CD8-positive, alpha-beta memory T cell (primary cell): ENCODE measurements at regions of chr19 and their contacts with region 1.

Region 1: DNA sequence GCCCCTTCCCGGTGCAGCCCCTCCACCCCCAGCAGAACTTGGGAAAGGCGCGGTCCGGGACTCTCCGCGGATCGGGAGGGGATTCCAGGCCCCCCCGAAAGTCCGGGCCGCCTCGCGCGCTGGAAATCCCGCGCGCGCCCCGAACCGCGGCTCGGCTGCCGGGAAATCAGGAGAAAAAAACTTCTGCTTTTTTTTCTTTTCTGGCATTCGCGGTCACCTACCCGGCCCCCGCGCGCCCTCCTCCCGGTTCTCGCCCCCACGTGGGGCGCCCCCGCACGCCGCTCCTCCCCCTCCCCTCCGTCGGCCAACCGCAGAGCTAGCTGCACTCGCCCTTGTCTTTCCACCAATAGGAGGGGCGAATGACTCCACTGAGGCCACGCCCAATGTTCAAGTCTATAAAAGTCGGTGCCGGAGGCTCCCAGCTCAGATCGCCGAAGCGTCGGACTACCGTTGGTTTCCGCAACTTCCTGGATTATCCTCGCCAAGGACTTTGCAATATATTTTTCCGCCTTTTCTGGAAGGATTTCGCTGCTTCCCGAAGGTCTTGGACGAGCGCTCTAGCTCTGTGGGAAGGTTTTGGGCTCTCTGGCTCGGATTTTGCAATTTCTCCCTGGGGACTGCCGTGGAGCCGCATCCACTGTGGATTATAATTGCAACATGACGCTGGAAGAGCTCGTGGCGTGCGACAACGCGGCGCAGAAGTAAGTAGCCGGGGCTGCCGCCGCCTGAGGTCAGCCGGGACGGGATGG is at the start of gene GADD45B:
- DNase-seq: peak; percentile 93 to 98 (median 96)
- H3K4me3 ChIP-seq: peak within 1 kb of the TSS; percentile 92
- H3K4me3 Mint-ChIP-seq: peak within 1 kb of the TSS; percentile 98 to 100 (median 100)
- H3K27ac ChIP-seq: peak within 1 kb of the TSS; percentile 83
- H3K27ac Mint-ChIP-seq: peak within 1 kb of the TSS; percentile 91 to 99 (median 96)
- H3K4me1 ChIP-seq: peaks cover 15% of the 10 kb centered on the region
- H3K4me1 Mint-ChIP-seq: peaks cover 8 to 22% (median 17%) of the 10 kb centered on the region in 3 donors
- H3K27me3 ChIP-seq: no peaks in the 10 kb centered on the region
- H3K27me3 Mint-ChIP-seq: peaks cover 0 to 16% of the 10 kb centered on the region in 2 donors
- total RNA-seq, gene GADD45B: 51.1 to 53.7 TPM

Region 2: DNA sequence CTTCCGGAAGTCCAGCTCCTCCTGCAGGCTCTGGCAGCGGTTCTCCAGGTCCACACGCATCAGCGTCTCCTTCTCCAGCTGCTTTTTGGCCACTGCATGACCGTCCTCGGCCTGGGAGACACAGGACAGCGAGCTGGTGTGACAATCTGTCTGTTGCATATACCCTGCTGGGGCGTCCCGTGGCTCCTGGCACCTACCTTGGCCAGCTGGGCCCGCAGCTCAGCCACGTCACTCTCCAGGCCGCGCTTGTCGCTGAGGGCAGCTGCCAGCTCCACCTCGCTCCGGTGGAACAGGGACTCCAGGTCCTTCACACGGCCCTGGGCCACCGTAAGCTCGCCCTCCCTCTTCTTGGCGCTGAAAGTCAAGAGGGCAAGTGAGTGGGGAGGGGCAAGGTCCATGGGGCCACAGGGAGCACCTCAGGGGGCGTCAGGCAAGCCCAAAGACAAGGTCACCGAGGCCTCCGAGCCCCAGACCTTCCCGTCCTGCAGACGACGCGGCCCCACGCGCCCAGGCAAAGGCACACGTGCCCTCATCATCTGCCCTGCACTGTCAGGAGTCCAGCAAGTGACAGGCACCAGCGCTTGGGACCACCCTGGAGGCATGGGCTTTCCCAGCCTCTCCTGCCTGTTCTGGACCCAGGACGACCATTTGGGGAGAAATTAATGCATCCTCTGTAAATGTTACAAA is 37.6 kb before region 1 on chr19:
- CTCF ChIA-PET with region 1: no interaction called
- POLR2A ChIA-PET with region 1: no interaction called
- DNase-seq: no peak
- H3K4me3 ChIP-seq: no peak overlapping the region
- H3K4me3 Mint-ChIP-seq: no peak overlapping the region
- H3K27ac ChIP-seq: no peak overlapping the region
- H3K27ac Mint-ChIP-seq: no peak overlapping the region
- H3K4me1 ChIP-seq: no peaks in the 10 kb centered on the region
- H3K4me1 Mint-ChIP-seq: peaks cover 0 to 4% (median 3%) of the 10 kb centered on the region in 3 donors
- H3K27me3 ChIP-seq: no peaks in the 10 kb centered on the region
- H3K27me3 Mint-ChIP-seq: peaks cover 0 to 1% of the 10 kb centered on the region in 2 donors

Region 3: DNA sequence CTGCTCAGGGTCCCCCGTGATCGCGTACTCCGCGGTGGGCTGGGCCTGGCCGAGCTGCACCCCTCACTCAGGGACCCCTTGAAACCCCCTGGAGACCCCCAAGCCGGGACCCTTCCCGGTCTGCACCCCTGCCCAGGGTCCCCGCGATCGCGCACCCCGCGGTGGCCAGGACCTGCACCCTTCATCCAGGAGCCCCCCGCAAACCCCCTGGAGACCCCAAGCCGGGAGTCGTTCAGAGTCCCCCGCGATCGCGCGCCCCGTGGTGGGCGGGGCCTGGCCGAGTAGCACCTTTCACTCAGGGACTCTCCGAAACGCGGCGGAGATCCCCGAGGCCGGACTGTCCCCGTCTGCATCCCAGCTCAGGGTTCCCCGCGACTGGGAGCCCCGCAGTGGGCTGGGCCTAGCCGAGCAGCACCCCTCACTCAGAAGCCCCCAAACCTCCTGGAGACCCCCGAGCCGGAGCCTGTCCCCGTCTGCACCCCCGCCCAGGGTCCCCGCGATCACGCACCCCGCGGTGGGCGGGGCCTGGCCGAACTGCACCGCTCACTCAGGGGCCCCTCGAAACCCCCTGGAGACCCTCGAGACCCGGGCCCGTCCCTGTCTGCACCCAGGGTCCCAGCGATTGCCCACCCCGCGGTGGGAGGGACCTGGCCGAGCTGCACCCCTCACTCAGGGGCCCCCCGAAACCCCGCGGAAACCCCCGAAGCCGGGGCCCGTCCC is 19.9 kb before region 1 on chr19:
- CTCF ChIA-PET with region 1: interaction called, 6 read pairs
- POLR2A ChIA-PET with region 1: interaction called, 24 read pairs
- DNase-seq: peak; percentile 28 to 73 (median 55)
- H3K4me3 ChIP-seq: peak overlapping the region; percentile 78
- H3K4me3 Mint-ChIP-seq: peak overlapping the region; percentile 76 to 93 (median 88)
- H3K27ac ChIP-seq: peak overlapping the region; percentile 74
- H3K27ac Mint-ChIP-seq: peak overlapping the region in 7 of 8 donors; percentile 58 to 92 (median 88)
- H3K4me1 ChIP-seq: peaks cover 15% of the 10 kb centered on the region
- H3K4me1 Mint-ChIP-seq: peaks cover 15 to 21% (median 15%) of the 10 kb centered on the region in 3 donors
- H3K27me3 ChIP-seq: no peaks in the 10 kb centered on the region
- H3K27me3 Mint-ChIP-seq: peaks cover 0 to 1% of the 10 kb centered on the region in 2 donors

Region 4: GRCh38 chr19:2507109-2507508 is 31.2 kb after region 1 on chr19:
- CTCF ChIA-PET with region 1: interaction called, 30 read pairs
- POLR2A ChIA-PET with region 1: interaction called, 100 read pairs
- DNase-seq: peak in 3 of 5 donors; percentile 36 to 62 (median 57)
- H3K4me3 ChIP-seq: no peak overlapping the region
- H3K4me3 Mint-ChIP-seq: peak overlapping the region in 5 of 7 donors; percentile 34 to 65 (median 46)
- H3K27ac ChIP-seq: peak overlapping the region; percentile 43
- H3K27ac Mint-ChIP-seq: peak overlapping the region in 7 of 8 donors; percentile 18 to 90 (median 72)
- H3K4me1 ChIP-seq: peaks cover 24% of the 10 kb centered on the region
- H3K4me1 Mint-ChIP-seq: peaks cover 19 to 40% (median 20%) of the 10 kb centered on the region in 3 donors
- H3K27me3 ChIP-seq: no peaks in the 10 kb centered on the region
- H3K27me3 Mint-ChIP-seq: no peaks in the 10 kb centered on the region

Region 5: GRCh38 chr19:2552859-2553258 is 77.0 kb after region 1 on chr19:
- CTCF ChIA-PET with region 1: interaction called, 6 read pairs
- POLR2A ChIA-PET with region 1: interaction called, 35 read pairs
- DNase-seq: peak; percentile 30 to 76 (median 65)
- H3K4me3 ChIP-seq: peak overlapping the region; percentile 53
- H3K4me3 Mint-ChIP-seq: peak overlapping the region; percentile 57 to 85 (median 80)
- H3K27ac ChIP-seq: no peak overlapping the region
- H3K27ac Mint-ChIP-seq: peak overlapping the region; percentile 51 to 93 (median 68)
- H3K4me1 ChIP-seq: peaks cover 11% of the 10 kb centered on the region
- H3K4me1 Mint-ChIP-seq: peaks cover 12 to 23% (median 15%) of the 10 kb centered on the region in 3 donors
- H3K27me3 ChIP-seq: no peaks in the 10 kb centered on the region
- H3K27me3 Mint-ChIP-seq: no peaks in the 10 kb centered on the region

Region 6: DNA sequence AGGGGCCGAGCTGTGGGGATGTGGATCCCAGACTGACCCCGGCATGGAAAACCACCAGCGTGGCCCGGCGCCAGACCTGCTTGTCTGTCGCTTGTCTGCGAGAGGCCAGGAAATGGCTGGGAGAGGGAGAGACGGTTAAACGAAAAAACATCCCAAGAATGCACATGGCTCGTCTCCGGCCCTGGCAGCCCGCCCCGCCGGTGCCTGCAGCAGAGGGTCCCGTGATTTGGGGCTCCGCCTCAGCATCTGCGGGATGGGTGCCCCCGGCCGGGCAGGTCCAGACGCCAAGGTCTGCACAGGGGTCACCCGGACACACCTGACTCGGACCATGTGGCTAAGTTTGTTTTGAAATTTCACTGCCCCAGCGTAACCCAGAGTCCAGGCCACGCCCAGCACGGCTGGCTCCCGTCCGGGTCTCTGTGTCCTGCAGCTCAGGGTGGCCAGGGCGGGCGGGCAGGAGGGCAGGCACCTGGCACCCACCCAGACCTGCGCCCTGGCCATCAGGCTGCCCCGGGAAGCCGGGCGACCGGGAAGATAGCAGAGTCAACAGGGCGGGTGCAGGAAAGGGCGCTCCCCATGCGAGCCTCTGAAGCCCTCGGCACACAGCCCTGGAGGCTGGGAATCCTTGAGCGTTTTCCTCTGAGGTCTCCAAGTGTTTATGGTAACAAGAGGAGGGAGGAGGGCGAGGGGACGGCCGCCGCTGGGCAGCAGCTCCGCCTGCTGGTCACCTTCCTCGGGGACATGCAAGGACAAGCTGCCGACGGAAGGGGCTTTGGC is 103.2 kb after region 1 on chr19:
- CTCF ChIA-PET with region 1: interaction called, 31 read pairs
- POLR2A ChIA-PET with region 1: interaction called, 29 read pairs
- DNase-seq: peak; percentile 40 to 79 (median 52)
- H3K4me3 ChIP-seq: peak overlapping the region; percentile 43
- H3K4me3 Mint-ChIP-seq: peak overlapping the region in 3 of 7 donors; percentile 34 to 39 (median 36)
- H3K27ac ChIP-seq: no peak overlapping the region
- H3K27ac Mint-ChIP-seq: no peak overlapping the region
- H3K4me1 ChIP-seq: peaks cover 12% of the 10 kb centered on the region
- H3K4me1 Mint-ChIP-seq: peaks cover 0 to 10% (median 0%) of the 10 kb centered on the region in 3 donors
- H3K27me3 ChIP-seq: peaks cover 5% of the 10 kb centered on the region
- H3K27me3 Mint-ChIP-seq: peaks cover 6 to 9% of the 10 kb centered on the region in 2 donors

Region 7: DNA sequence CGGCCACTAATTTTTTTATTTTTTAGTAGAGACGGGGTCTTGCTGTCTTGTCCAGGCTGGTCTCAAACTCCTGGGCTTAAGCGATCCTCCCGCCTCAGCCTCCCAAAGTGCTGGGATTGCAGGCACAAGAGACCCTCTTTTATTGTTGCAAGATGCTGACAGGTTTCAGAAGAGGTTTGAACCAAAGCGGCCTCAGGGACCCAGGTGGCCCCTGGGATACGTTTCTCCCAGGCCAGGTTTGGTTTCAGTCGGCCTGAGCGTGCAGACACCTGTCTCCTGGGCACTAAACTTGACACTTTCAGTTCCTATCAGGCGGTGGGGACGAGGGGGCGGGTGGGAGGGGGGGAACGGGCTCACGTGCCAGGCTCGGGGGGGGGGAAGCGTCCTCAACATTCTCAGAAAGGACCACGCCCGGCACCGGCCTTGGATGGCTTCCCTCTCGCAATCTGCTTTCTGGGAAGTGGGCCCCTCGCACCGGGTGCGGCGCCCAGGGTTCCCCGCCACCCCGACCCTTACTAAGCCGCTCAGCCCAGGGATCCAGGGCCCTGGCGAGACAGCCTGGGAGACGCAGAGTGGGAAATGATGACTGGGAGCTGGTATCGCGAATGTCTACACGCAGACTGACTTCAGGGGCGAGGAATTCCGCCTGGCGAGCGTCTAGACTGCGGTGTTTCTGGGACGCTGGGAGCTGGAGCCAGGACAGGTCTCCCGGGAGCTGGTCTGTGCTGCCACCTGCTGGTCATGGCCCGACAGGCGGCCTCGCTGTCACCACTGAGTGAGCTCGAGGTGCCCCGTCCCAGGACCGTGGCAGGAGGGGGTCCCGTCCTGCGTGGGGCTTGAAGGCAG is 135.0 kb after region 1 on chr19:
- CTCF ChIA-PET with region 1: interaction called, 111 read pairs
- POLR2A ChIA-PET with region 1: interaction called, 101 read pairs
- DNase-seq: peak; percentile 76 to 89 (median 87)
- H3K4me3 ChIP-seq: peak overlapping the region; percentile 67
- H3K4me3 Mint-ChIP-seq: peak overlapping the region; percentile 45 to 89 (median 83)
- H3K27ac ChIP-seq: no peak overlapping the region
- H3K27ac Mint-ChIP-seq: peak overlapping the region in 7 of 8 donors; percentile 29 to 95 (median 85)
- H3K4me1 ChIP-seq: peaks cover 28% of the 10 kb centered on the region
- H3K4me1 Mint-ChIP-seq: peaks cover 32 to 47% (median 39%) of the 10 kb centered on the region in 3 donors
- H3K27me3 ChIP-seq: no peaks in the 10 kb centered on the region
- H3K27me3 Mint-ChIP-seq: peaks cover 0 to 5% of the 10 kb centered on the region in 2 donors

Region 8: DNA sequence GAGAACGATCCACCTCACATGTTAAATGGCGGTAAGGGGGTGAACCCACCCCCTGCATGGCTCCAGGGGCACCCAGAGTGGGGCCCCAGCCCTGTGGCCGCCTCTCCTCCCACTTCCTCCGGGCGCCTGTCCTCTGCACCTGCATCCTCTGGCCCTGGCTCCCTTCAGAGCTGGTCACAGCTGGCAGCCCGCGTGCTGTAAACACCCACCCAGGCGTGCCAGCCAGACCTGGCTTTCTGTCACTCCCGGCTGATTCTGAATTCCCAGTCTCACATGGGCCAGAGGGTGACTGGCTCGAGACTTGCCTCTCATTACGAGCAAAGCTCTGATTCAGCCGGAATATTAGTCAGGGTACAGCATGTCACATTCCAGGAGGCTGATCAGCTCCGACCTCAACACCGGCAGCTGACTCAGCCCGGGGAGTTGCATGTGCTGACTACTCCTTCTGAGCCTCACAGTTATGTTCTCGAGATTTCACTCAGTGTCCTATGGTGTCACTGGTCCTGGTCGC is 151.5 kb after region 1 on chr19:
- CTCF ChIA-PET with region 1: interaction called, 45 read pairs
- POLR2A ChIA-PET with region 1: interaction called, 86 read pairs
- DNase-seq: no peak
- H3K4me3 ChIP-seq: no peak overlapping the region
- H3K4me3 Mint-ChIP-seq: peak overlapping the region in 1 of 7 donors; percentile 20
- H3K27ac ChIP-seq: no peak overlapping the region
- H3K27ac Mint-ChIP-seq: peak overlapping the region; percentile 29 to 93 (median 68)
- H3K4me1 ChIP-seq: peaks cover 24% of the 10 kb centered on the region
- H3K4me1 Mint-ChIP-seq: peaks cover 38 to 51% (median 39%) of the 10 kb centered on the region in 3 donors
- H3K27me3 ChIP-seq: no peaks in the 10 kb centered on the region
- H3K27me3 Mint-ChIP-seq: peaks cover 0 to 1% of the 10 kb centered on the region in 2 donors